Activated B cell treated with CpG ODN at 0.5 μM for 24 hours (primary cell): ENCODE measurements at regions of chr18 and their contacts with region 1.

Region 1: DNA sequence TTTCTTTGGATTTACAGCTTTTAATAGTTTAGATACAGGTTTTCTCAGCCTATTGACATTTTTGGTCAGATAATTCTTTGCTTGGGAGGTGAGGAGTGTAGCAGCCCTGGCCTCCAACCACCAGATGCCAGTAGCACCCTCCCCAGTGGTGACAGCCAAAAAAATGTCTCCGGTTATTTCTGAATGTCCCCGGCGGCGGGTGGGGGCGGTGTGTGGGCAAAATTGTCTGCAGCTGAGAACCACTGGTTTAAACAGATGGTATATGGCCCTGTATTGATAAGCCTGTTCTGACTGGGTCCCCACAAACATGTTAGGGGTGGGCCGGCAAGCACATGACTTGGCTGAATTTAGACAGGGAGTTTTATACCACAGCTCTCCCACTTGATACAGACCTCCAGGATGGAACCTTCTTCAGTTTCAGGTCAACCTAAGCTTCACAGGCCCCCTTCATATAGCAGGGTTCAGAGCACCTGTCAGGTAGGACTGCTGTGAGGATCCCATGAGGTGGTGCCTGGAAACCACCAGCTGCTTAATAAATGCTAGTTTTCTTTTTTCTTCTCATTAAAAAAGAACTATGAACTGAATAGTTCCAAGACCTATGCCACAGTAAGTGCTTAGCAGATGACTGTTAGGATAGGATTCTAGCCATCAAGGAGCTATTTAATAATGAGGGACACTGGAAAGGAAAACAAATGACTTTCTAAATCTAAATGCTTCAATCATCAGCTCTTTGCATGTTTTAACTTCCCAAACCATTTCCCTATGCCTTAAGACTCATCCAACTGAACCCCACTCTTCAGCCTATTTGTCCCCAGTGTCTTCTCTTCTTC is 18.1 kb downstream of the LPIN2 start:
- DNase-seq: peak; percentile 47
- ATAC-seq: peak; percentile 97
- H3K4me3 Mint-ChIP-seq: peak overlapping the region; percentile 48
- H3K27ac Mint-ChIP-seq: peak overlapping the region; percentile 50
- H3K4me1 Mint-ChIP-seq: peaks cover 34% of the 10 kb centered on the region
- H3K27me3 Mint-ChIP-seq: no peaks in the 10 kb centered on the region
- CTCF ChIP-seq: no peak

Region 2: DNA sequence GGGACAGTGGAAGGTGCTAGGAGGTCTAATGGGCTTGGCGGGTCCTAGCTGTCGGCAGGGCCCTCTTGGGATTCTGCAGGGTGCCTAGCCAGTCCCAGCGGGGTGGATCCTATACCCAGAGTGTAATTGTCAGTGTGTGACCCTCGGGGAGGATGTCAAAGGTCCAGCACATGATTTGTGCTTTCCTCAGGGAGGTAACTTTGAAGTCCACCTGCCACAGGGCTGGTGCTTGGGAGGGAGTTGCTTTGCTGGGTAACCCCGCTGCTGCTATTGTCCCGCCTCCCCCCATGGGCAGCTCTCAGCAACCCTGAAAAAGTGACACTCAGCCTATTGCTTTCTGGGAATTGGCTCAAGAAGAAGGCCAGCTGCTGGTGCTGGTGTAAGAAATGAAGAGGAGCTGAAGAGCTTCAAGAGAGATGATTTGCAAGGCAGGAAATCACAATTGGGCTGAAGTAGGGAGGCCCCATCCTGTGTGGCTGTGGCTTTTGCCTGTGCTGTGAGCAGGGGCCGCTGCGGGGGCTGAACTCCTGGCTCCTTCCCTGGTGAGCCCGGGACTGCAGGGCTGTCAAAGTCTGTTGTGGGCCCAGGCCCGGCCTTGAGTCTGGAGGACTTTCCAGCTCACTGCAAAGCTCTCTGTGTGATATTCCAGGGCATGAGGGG is 111.6 kb before region 1 on chr18:
- CTCF ChIA-PET with region 1: no interaction called
- POLR2A ChIA-PET with region 1: no interaction called
- intact Hi-C with region 1: no loop called
- DNase-seq: no peak
- ATAC-seq: no peak
- H3K4me3 Mint-ChIP-seq: no peak overlapping the region
- H3K27ac Mint-ChIP-seq: no peak overlapping the region
- H3K4me1 Mint-ChIP-seq: peaks cover 18% of the 10 kb centered on the region
- H3K27me3 Mint-ChIP-seq: peaks cover 4% of the 10 kb centered on the region
- CTCF ChIP-seq: no peak

Region 3: GRCh38 chr18:3062798-3063680 is 68.2 kb after region 1 on chr18:
- CTCF ChIA-PET with region 1: interaction called, 71 read pairs
- POLR2A ChIA-PET with region 1: interaction called, 5 read pairs
- intact Hi-C with region 1: loop called (anchors 1 kb)
- DNase-seq: peak; percentile 29
- ATAC-seq: peak; percentile 59
- H3K4me3 Mint-ChIP-seq: no peak overlapping the region
- H3K27ac Mint-ChIP-seq: no peak overlapping the region
- H3K4me1 Mint-ChIP-seq: peaks cover 49% of the 10 kb centered on the region
- H3K27me3 Mint-ChIP-seq: no peaks in the 10 kb centered on the region
- CTCF ChIP-seq: no peak

Region 4: GRCh38 chr18:3151399-3152264 is 156.8 kb after region 1 on chr18:
- CTCF ChIA-PET with region 1: interaction called, 18 read pairs
- POLR2A ChIA-PET with region 1: no interaction called
- intact Hi-C with region 1: loop called (anchors 2 kb)
- DNase-seq: no peak
- ATAC-seq: no peak
- H3K4me3 Mint-ChIP-seq: no peak overlapping the region
- H3K27ac Mint-ChIP-seq: peak overlapping the region; percentile 36
- H3K4me1 Mint-ChIP-seq: peaks cover 2% of the 10 kb centered on the region
- H3K27me3 Mint-ChIP-seq: no peaks in the 10 kb centered on the region
- CTCF ChIP-seq: peak; percentile 99